ENCODE measurements at regions of chr7 and their contacts with region 1.

Region 1: DNA sequence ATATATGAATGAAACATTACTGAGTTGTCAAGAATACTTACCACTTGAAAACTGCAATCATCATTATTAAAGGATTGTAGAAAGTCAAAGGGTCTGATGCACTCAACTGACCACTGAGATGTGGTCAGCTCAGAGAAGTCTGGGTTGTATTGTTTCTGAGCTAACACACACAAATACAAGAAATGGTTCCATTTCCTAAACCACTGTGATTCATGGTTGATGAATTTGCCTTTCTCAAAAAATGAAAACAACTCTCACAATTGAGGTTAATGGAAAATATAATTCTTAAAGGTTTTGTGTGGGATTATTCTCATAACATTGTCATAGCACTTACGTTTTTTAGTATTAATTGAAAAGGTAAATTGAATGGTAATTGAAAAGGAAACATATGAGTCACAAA is 45.6 kb upstream of the TAS2R16 start:
- DNase-seq: peak; percentile 94
- H3K4me3 ChIP-seq: no peak overlapping the region
- H3K27ac ChIP-seq: peak overlapping the region; percentile 84
- H3K4me1 ChIP-seq: peaks cover 20% of the 10 kb centered on the region
- H3K27me3 ChIP-seq: no peaks in the 10 kb centered on the region
- CTCF ChIP-seq: no peak
- POLR2A ChIP-seq: no peak

Region 2: GRCh38 chr7:123024989-123025758 is 15.9 kb before region 1 on chr7:
- CTCF ChIA-PET with region 1: interaction called, 3 read pairs
- POLR2A ChIA-PET with region 1: no interaction called
- dilution Hi-C with region 1: no loop called
- intact Hi-C with region 1: loop called (anchors 1 kb)
- DNase-seq: peak; percentile 98
- H3K4me3 ChIP-seq: peak overlapping the region in 1 of 3 experiments; percentile 18
- H3K27ac ChIP-seq: peak overlapping the region; percentile 90
- H3K4me1 ChIP-seq: peaks cover 19% of the 10 kb centered on the region
- H3K27me3 ChIP-seq: no peaks in the 10 kb centered on the region
- CTCF ChIP-seq: no peak
- POLR2A ChIP-seq: no peak

Region 3: GRCh38 chr7:123534383-123535260 is 493.5 kb after region 1 on chr7 and contains the start of gene IQUB:
- CTCF ChIA-PET with region 1: no interaction called
- POLR2A ChIA-PET with region 1: no interaction called
- dilution Hi-C with region 1: no loop called
- intact Hi-C with region 1: loop called (anchors 10 kb)
- DNase-seq: peak; percentile 95
- H3K4me3 ChIP-seq: peak within 1 kb of the TSS; percentile 61 to 81 (median 80)
- H3K27ac ChIP-seq: peak within 1 kb of the TSS; percentile 74
- H3K4me1 ChIP-seq: peaks cover 27% of the 10 kb centered on the region
- H3K27me3 ChIP-seq: peaks cover 6 to 13% of the 10 kb centered on the region in 2 experiments
- CTCF ChIP-seq: no peak
- POLR2A ChIP-seq: no peak
- total RNA-seq, gene IQUB: not detected in 2 replicates

Region 4: DNA sequence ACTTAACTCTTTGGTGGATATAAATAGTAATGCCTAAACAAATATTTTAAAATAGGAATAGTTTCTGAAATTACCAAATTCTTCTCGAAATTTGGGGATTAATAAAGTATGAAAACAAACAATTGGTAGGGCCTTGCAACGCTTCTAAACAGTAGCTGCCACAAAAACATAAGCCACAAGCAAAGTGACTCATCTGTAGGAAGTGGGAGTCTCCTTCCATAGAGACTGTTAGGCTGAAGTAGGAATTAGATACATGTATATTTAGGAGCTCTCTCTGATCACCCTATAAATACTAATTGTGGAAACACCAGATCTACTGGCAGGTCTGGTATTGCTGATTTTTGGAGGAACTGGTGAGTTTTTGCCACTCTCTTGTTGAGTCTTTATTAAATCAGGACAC is 608.9 kb after region 1 on chr7:
- CTCF ChIA-PET with region 1: no interaction called
- POLR2A ChIA-PET with region 1: no interaction called
- dilution Hi-C with region 1: no loop called
- intact Hi-C with region 1: no loop called
- DNase-seq: peak; percentile 46
- H3K4me3 ChIP-seq: no peak overlapping the region
- H3K27ac ChIP-seq: no peak overlapping the region
- H3K4me1 ChIP-seq: peaks cover 11% of the 10 kb centered on the region
- H3K27me3 ChIP-seq: no peaks in the 10 kb centered on the region
- CTCF ChIP-seq: no peak
- POLR2A ChIP-seq: no peak